ENCODE measurements at regions of chr17 and their contacts with region 1.

Region 1: DNA sequence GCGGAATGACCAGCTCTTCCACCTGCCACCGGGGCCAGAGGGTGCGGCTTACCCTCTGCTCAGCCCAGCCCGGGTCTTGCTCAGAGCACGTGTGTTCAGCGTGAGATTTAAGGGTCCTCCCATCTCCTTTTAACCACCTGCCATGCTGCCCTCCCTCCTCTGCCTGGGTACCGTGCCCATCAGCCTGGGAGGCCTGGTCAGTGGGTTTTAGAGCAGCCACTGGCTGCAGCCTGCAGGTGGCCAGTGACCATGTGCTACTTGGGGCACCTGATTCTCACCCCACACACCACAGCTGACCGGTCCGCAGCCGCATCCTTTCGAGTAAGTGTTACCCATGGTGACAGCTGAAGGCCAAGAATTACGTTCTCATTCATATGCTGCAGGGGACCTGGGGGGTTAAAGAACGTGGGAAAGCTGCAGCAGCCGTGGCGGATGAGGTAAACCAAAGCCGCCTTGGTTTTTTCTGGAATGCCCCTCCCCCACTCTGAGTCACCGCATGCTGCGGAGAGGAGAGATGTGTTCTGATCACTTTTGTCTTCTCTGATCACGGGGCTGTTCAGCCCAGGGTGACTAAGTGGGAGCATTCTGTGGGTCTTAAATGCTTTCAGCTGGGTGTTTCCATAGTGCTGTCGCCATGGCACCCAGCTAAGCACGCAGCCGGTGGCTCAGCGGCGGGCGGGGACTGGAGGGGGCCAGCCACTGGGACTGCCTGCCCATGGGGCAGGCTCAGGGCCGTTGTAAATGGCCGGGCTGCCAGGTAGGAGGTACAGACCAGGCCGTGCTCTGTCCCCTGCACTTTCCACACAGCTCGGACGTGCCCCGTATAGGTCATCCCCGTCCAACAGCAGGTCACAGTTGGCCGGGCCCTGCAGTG is 59.8 kb downstream of the BAIAP2 start:
- DNase-seq: peak; percentile 98
- H3K4me3 Mint-ChIP-seq: no peak overlapping the region
- H3K27ac Mint-ChIP-seq: peak overlapping the region; percentile 88
- H3K4me1 Mint-ChIP-seq: peaks cover 43% of the 10 kb centered on the region
- H3K27me3 Mint-ChIP-seq: no peaks in the 10 kb centered on the region
- CTCF ChIP-seq: no peak

Region 2: GRCh38 chr17:81018044-81018802 is 76.5 kb before region 1 on chr17:
- CTCF ChIA-PET with region 1: interaction called, 23 read pairs
- POLR2A ChIA-PET with region 1: no interaction called
- intact Hi-C with region 1: no loop called
- DNase-seq: no peak
- H3K4me3 Mint-ChIP-seq: no peak overlapping the region
- H3K27ac Mint-ChIP-seq: no peak overlapping the region
- H3K4me1 Mint-ChIP-seq: no peaks in the 10 kb centered on the region
- H3K27me3 Mint-ChIP-seq: no peaks in the 10 kb centered on the region
- CTCF ChIP-seq: no peak

Region 3: GRCh38 chr17:81040791-81041337 is 53.9 kb before region 1 on chr17:
- CTCF ChIA-PET with region 1: interaction called, 10 read pairs
- POLR2A ChIA-PET with region 1: interaction called, 19 read pairs
- intact Hi-C with region 1: no loop called
- DNase-seq: peak; percentile 22
- H3K4me3 Mint-ChIP-seq: peak overlapping the region; percentile 59
- H3K27ac Mint-ChIP-seq: peak overlapping the region; percentile 69
- H3K4me1 Mint-ChIP-seq: peaks cover 63% of the 10 kb centered on the region
- H3K27me3 Mint-ChIP-seq: no peaks in the 10 kb centered on the region
- CTCF ChIP-seq: peak; percentile 39

Region 4: DNA sequence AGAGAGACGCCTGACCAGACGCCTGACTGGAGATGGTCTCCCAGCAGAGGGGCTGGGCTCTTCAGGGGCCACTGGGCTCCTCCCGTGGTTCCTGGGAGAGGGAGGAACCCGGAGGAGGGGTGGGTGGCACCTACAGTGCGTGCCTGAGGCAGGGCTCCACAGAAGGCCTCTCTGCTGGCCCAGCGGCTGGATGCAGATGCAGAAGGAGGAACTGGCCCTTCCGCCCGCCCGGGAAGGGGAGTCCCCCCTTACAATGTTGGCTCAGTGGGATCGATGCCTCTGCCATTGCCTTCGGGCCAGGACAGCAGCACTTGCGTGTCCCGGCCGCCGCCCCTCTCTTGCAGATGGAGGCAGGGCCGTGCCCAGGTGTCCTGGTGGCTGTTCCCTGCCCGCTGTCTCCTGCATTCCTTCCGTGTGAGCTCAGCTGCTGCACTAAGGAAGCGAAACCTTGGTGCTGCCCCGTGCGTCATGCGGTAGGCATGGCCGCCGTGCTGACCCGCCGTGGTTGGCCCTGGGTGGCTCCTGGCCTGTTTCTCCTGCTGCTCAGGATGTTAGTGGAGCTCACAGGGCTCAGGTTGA is 44.7 kb before region 1 on chr17:
- CTCF ChIA-PET with region 1: interaction called, 10 read pairs
- POLR2A ChIA-PET with region 1: interaction called, 22 read pairs
- intact Hi-C with region 1: no loop called
- DNase-seq: peak; percentile 93
- H3K4me3 Mint-ChIP-seq: peak overlapping the region; percentile 68
- H3K27ac Mint-ChIP-seq: peak overlapping the region; percentile 98
- H3K4me1 Mint-ChIP-seq: peaks cover 34% of the 10 kb centered on the region
- H3K27me3 Mint-ChIP-seq: no peaks in the 10 kb centered on the region
- CTCF ChIP-seq: no peak

Region 5: DNA sequence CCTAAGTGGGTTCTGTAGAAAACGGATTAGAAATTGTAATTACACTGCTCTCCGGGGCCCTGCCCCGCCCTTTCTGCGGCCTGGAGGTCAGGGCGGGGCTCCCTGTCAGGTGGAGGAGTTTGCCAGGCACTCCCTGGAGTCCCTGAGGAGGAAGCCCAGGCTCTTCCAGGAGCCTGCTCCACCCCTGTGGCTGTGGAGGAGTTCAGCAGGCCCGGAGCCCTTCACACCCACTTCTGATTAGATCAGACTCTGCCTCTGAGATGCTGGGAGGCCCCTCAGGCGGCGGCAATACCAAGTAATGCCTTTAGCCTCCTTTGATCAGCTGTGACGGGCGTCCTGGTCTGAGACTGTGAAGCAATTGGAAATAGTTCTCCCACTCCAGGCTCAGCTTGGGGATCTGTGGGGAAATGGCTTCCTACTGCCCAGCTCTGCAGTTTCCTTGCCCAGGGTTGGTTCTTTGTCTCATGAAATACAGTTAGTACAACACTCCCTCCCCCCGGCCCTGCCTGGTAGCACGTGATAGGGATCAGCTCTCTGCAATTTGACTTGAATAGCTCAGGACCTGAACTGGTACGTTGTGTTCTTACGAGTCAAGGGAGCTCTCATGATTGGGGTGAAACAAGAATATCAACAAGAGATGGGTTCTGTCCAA is 37.5 kb before region 1 on chr17:
- CTCF ChIA-PET with region 1: interaction called, 3 read pairs
- POLR2A ChIA-PET with region 1: interaction called, 22 read pairs
- intact Hi-C with region 1: loop called (anchors 1 kb)
- DNase-seq: peak; percentile 77
- H3K4me3 Mint-ChIP-seq: peak overlapping the region; percentile 67
- H3K27ac Mint-ChIP-seq: peak overlapping the region; percentile 94
- H3K4me1 Mint-ChIP-seq: peaks cover 22% of the 10 kb centered on the region
- H3K27me3 Mint-ChIP-seq: no peaks in the 10 kb centered on the region
- CTCF ChIP-seq: no peak

Region 6: DNA sequence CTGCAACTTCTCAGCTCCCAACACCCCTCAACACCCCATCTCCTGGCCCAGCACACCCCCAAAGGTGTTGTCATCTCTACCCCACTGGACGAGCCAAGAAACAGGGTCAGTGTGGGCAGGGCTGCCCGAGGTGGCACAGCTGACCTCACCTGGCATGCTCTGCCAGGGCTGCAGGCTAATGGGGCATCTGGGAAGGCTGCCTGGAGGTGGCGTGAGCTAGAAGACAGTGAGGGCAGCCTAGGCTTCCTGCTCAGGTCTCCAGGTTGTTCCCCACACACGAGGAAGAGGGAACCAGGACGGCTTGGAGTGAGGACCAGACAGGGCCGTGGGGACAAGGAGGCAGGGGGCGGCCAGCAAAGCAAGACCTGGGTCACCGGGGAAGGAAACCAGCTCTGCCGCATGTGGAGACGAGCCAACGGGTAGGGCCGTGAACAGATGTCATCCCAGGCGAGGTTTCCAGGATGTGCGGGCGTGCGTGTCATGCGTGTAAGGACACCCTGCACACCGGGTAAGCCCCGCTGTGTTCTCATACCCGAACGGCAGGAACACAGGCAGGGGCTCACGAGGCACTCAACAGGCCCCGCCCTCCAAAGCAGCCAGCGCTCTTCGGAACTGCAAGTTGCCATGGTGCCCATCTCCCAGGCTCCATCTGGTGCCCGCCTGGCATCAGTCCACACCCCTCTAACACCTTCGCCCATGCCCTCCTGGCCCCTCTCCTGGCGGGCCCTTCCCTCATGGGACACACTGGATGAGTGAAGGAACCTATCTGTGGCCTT is 40.9 kb after region 1 on chr17:
- CTCF ChIA-PET with region 1: no interaction called
- POLR2A ChIA-PET with region 1: no interaction called
- intact Hi-C with region 1: no loop called
- DNase-seq: no peak
- H3K4me3 Mint-ChIP-seq: no peak overlapping the region
- H3K27ac Mint-ChIP-seq: no peak overlapping the region
- H3K4me1 Mint-ChIP-seq: peaks cover 6% of the 10 kb centered on the region
- H3K27me3 Mint-ChIP-seq: no peaks in the 10 kb centered on the region
- CTCF ChIP-seq: no peak

Region 7: GRCh38 chr17:81200695-81201580 is 106.2 kb after region 1 on chr17:
- CTCF ChIA-PET with region 1: no interaction called
- POLR2A ChIA-PET with region 1: no interaction called
- intact Hi-C with region 1: no loop called
- DNase-seq: peak; percentile 63
- H3K4me3 Mint-ChIP-seq: no peak overlapping the region
- H3K27ac Mint-ChIP-seq: no peak overlapping the region
- H3K4me1 Mint-ChIP-seq: no peaks in the 10 kb centered on the region
- H3K27me3 Mint-ChIP-seq: no peaks in the 10 kb centered on the region
- CTCF ChIP-seq: peak; percentile 54